ENCODE measurements at regions of chrX and their contacts with region 1.

Region 1: GRCh38 chrX:100994352-100995281 is 25.1 kb downstream of the ARL13A start:
- DNase-seq: peak; percentile 27
- H3K4me3 Mint-ChIP-seq: no peak overlapping the region
- H3K27ac Mint-ChIP-seq: peak overlapping the region; percentile 76
- H3K4me1 Mint-ChIP-seq: peaks cover 24% of the 10 kb centered on the region
- H3K27me3 Mint-ChIP-seq: no peaks in the 10 kb centered on the region

Region 2: DNA sequence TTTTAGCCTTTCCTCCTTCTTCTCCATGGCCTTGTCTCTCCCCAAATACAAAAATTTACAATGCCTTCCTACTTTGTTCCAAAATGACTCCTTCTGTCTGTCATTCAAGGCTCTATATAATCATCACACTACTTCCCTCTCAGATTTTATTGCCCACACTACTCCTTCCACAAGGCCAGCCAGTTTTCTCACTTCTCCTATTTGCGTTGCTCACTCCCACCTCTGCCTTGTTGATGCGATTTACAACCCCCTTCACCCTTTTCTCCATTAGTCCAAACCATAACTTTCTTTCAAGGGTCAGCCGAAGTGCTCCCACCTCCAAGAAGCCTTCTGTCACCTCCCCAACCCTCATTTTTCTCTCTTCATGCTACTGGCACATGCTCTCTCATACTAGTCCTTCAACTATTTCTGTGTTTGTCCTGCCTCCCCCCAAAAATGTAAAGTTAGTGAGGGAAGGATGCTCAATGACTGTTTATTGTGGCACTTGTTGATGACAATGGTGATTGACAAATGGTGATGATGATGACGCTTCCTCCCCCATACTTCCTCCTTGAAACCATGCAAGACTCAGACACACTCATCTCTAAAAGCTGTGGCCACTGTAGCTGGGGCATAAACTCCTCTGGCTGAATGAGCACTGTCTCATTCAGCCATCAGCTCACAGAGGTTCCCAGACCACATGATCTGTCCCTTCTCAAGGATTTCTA is 63.2 kb before region 1 on chrX:
- CTCF ChIA-PET with region 1: no interaction called
- POLR2A ChIA-PET with region 1: no interaction called
- intact Hi-C with region 1: loop called (anchors 1 kb)
- DNase-seq: peak; percentile 43
- H3K4me3 Mint-ChIP-seq: no peak overlapping the region
- H3K27ac Mint-ChIP-seq: peak overlapping the region; percentile 73
- H3K4me1 Mint-ChIP-seq: peaks cover 21% of the 10 kb centered on the region
- H3K27me3 Mint-ChIP-seq: no peaks in the 10 kb centered on the region

Region 3: DNA sequence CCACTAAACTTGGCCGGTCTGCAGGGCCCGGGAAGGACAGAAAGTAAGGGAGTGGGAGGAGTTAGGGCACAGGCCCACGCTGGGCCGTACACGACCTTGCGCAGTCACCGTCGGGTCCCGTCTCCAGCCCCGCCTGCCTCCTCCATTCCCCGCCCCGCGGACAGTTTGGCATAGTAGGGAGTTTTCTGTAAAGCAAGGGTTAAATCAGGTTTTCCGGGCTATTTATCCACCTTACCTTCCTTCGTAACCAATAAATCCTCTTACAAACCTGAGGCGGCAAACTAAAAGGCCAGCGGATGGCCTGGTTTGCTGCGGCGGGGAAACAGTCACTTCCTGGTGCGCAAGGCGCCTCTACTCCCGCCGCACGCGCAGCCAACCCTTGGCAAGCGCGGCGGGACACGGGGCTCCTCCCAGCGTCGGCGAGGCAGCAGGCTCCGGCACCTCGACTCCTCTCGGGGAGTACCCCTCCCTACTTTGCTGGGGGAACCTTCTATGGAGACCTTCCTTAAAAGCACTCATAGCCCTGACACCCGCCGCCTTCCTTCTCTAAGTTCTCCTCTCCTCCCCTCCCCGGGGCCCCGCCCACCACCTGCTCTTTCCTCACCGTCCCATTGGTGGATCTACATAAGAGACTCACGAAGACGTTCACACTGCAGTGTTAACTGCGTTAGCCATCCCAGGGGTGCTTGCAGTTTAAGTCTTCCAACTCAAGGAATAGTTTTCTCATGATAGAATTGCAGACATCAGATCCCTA is 57.1 kb after region 1 on chrX and contains the start of gene TRMT2B:
- CTCF ChIA-PET with region 1: no interaction called
- POLR2A ChIA-PET with region 1: no interaction called
- intact Hi-C with region 1: loop called (anchors 10 kb)
- DNase-seq: peak; percentile 87
- H3K4me3 Mint-ChIP-seq: peak within 1 kb of the TSS; percentile 86
- H3K27ac Mint-ChIP-seq: peak within 1 kb of the TSS; percentile 96
- H3K4me1 Mint-ChIP-seq: peaks cover 19% of the 10 kb centered on the region
- H3K27me3 Mint-ChIP-seq: no peaks in the 10 kb centered on the region
- total RNA-seq, gene TRMT2B: 19.6 to 21.2 TPM